ENCODE measurements at regions of chr12 and their contacts with region 1.

Region 1: DNA sequence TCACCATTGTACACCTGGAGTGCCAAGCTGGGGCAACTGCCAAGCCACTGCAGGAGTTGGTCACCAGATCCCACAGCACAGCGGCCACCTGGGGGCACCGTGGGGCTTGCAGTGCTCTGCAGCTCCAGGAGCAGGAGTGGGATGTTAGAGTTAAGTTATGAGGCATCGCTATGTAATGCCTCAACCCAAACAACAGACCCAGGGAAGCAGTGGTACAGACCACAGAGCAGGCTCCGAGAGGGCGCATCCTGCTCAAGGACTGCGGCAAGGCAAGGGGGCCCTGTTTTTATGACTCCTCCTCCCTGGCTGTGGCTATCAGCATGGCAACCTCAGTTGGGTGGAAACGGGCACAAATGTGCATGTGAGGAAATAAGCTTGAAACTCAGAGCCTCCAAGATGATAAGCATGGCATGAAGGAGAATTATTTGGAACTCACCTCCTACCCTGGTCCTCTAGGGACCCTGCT is 63.1 kb downstream of the ARL6IP4 start:
- DNase-seq: peak; percentile 84 to 89
- H3K4me3 ChIP-seq: no peak overlapping the region
- H3K27ac ChIP-seq: peak overlapping the region; percentile 45 to 46
- H3K4me1 ChIP-seq: no peaks in the 10 kb centered on the region
- H3K27me3 ChIP-seq: no peaks in the 10 kb centered on the region
- CTCF ChIP-seq: peak; percentile 79 to 92 (median 82)
- POLR2A ChIP-seq: no peak

Region 2: GRCh38 chr12:123237646-123238329 is 194.2 kb after region 1 on chr12:
- intact Hi-C with region 1: loop called (anchors 5 kb)
- DNase-seq: peak; percentile 60 to 67
- H3K4me3 ChIP-seq: no peak overlapping the region
- H3K27ac ChIP-seq: peak overlapping the region in 1 of 2 donors; percentile 39
- H3K4me1 ChIP-seq: peaks cover 9 to 13% of the 10 kb centered on the region in 2 donors
- H3K27me3 ChIP-seq: no peaks in the 10 kb centered on the region
- CTCF ChIP-seq: peak; percentile 65 to 76 (median 70)
- POLR2A ChIP-seq: no peak

Measured in uterus (tissue), 4 donors.